Tibial artery (tissue), 4 donors: ENCODE measurements at regions of chr4 and their contacts with region 1.

Region 1: DNA sequence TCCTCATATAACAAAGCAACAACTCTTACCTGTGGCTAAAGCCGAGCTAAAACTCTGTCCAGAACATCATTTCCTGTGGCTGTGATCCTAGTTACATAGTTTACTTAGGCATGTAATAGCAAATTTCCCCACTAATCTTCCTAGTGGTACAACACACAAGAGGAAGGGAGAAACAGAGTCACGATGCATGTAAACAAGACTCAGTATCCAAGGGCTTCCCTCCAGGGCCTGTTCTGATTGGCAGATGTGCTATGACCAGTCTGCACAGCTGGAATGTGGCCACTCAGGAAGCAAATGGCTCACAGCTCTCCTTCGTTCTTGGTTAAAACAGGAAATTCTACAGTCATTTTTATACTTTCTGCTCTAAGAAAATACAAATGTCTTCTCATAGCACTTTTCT is 49.2 kb upstream of the PRSS48 start:
- DNase-seq: peak; percentile 89
- H3K4me3 ChIP-seq: peak overlapping the region; percentile 49 to 56
- H3K27ac ChIP-seq: peak overlapping the region; percentile 72 to 79
- H3K4me1 ChIP-seq: peaks cover 0 to 41% (median 0%) of the 10 kb centered on the region in 4 donors
- H3K27me3 ChIP-seq: no peaks in the 10 kb centered on the region
- CTCF ChIP-seq: peak in 1 of 2 experiments; percentile 6

Region 2: GRCh38 chr4:150751648-150752047 is 476.1 kb before region 1 on chr4:
- intact Hi-C with region 1: no loop called
- DNase-seq: no peak
- H3K4me3 ChIP-seq: no peak overlapping the region
- H3K27ac ChIP-seq: no peak overlapping the region
- H3K4me1 ChIP-seq: no peaks in the 10 kb centered on the region
- H3K27me3 ChIP-seq: no peaks in the 10 kb centered on the region
- CTCF ChIP-seq: no peak

Region 3: GRCh38 chr4:151325111-151325948 is 97.6 kb after region 1 on chr4 and contains the start of gene SH3D19:
- intact Hi-C with region 1: loop called (anchors 10 kb)
- DNase-seq: peak; percentile 60 to 82
- H3K4me3 ChIP-seq: peak within 1 kb of the TSS; percentile 76 to 98
- H3K27ac ChIP-seq: peak within 1 kb of the TSS; percentile 92 to 97
- H3K4me1 ChIP-seq: peaks cover 0 to 43% (median 27%) of the 10 kb centered on the region in 4 donors
- H3K27me3 ChIP-seq: no peaks in the 10 kb centered on the region
- CTCF ChIP-seq: no peak